Mammary epithelial cell (primary cell): ENCODE measurements at regions of chr9 and their contacts with region 1.

Region 1: GRCh38 chr9:80885894-80886293 is 803.5 kb downstream of the TLE1 start:
- DNase-seq: no peak
- H3K4me3 ChIP-seq: no peak overlapping the region
- H3K27ac ChIP-seq: no peak overlapping the region
- H3K4me1 ChIP-seq: no peaks in the 10 kb centered on the region
- H3K27me3 ChIP-seq: no peaks in the 10 kb centered on the region
- CTCF ChIP-seq: peak in 1 of 2 donors; percentile 49

Region 2: DNA sequence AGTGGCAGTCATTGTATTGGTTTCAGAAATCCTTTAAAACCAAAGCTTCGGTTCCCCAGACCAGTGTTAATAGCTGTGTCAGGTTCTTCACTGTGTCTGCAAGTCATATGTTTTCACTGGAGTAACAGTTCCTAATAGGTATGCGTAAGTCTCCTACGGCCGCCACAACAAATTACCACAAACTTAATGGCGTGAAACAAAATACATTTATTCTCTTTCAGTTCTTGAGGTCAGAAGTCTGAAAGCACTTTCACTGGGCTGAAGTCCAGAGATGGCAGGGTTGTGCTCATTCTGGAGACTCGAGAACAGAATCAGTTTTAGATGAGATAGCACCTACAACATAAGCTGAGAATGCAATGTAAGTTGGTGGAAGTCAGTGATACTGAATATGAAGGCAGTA is 758.0 kb before region 1 on chr9:
- CTCF ChIA-PET with region 1: no interaction called
- dilution Hi-C with region 1: no loop called
- in situ Hi-C with region 1: no loop called
- intact Hi-C with region 1: no loop called
- DNase-seq: no peak
- H3K4me3 ChIP-seq: no peak overlapping the region
- H3K27ac ChIP-seq: no peak overlapping the region
- H3K4me1 ChIP-seq: no peaks in the 10 kb centered on the region
- H3K27me3 ChIP-seq: no peaks in the 10 kb centered on the region
- CTCF ChIP-seq: no peak

Region 3: GRCh38 chr9:80175286-80176150 is 710.4 kb before region 1 on chr9:
- CTCF ChIA-PET with region 1: no interaction called
- dilution Hi-C with region 1: no loop called
- in situ Hi-C with region 1: no loop called
- intact Hi-C with region 1: loop called (anchors 5 kb)
- DNase-seq: peak; percentile 16
- H3K4me3 ChIP-seq: no peak overlapping the region
- H3K27ac ChIP-seq: no peak overlapping the region
- H3K4me1 ChIP-seq: no peaks in the 10 kb centered on the region
- H3K27me3 ChIP-seq: no peaks in the 10 kb centered on the region
- CTCF ChIP-seq: peak; percentile 59 to 71

Region 4: GRCh38 chr9:80285326-80285725 is 600.6 kb before region 1 on chr9:
- CTCF ChIA-PET with region 1: no interaction called
- dilution Hi-C with region 1: no loop called
- in situ Hi-C with region 1: no loop called
- intact Hi-C with region 1: loop called (anchors 10 kb)
- DNase-seq: peak; percentile 13
- H3K4me3 ChIP-seq: no peak overlapping the region
- H3K27ac ChIP-seq: no peak overlapping the region
- H3K4me1 ChIP-seq: no peaks in the 10 kb centered on the region
- H3K27me3 ChIP-seq: no peaks in the 10 kb centered on the region
- CTCF ChIP-seq: peak; percentile 23 to 43

Region 5: DNA sequence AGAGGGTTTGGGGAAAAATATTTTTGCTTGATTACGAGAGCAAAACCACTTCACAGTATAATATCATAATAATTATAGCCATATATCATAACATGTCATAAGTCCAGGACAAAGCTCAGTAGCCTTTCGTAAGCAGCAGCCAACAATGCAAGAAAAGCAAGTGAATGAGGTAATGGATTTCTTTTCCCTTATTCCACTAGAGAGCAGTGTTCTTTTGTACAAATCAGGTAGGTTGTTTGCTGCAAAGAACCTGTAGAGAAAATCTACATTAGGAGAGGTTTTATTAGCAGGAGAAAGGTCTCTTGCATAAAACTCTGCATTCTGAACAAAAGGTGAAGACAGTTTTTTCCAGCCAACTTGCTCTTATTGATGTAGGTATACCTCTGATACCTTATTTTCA is 280.8 kb before region 1 on chr9:
- CTCF ChIA-PET with region 1: no interaction called
- dilution Hi-C with region 1: no loop called
- in situ Hi-C with region 1: no loop called
- intact Hi-C with region 1: loop called (anchors 1 kb)
- DNase-seq: peak; percentile 22
- H3K4me3 ChIP-seq: no peak overlapping the region
- H3K27ac ChIP-seq: no peak overlapping the region
- H3K4me1 ChIP-seq: no peaks in the 10 kb centered on the region
- H3K27me3 ChIP-seq: no peaks in the 10 kb centered on the region
- CTCF ChIP-seq: peak; percentile 27 to 49

Region 6: GRCh38 chr9:80664327-80665200 is 221.3 kb before region 1 on chr9:
- CTCF ChIA-PET with region 1: no interaction called
- dilution Hi-C with region 1: no loop called
- in situ Hi-C with region 1: no loop called
- intact Hi-C with region 1: loop called (anchors 1 kb)
- DNase-seq: peak; percentile 54
- H3K4me3 ChIP-seq: no peak overlapping the region
- H3K27ac ChIP-seq: no peak overlapping the region
- H3K4me1 ChIP-seq: no peaks in the 10 kb centered on the region
- H3K27me3 ChIP-seq: no peaks in the 10 kb centered on the region
- CTCF ChIP-seq: peak; percentile 34 to 66

Region 7: GRCh38 chr9:81045658-81046057 is 159.8 kb after region 1 on chr9:
- CTCF ChIA-PET with region 1: no interaction called
- dilution Hi-C with region 1: no loop called
- in situ Hi-C with region 1: no loop called
- intact Hi-C with region 1: no loop called
- DNase-seq: no peak
- H3K4me3 ChIP-seq: no peak overlapping the region
- H3K27ac ChIP-seq: no peak overlapping the region
- H3K4me1 ChIP-seq: no peaks in the 10 kb centered on the region
- H3K27me3 ChIP-seq: no peaks in the 10 kb centered on the region
- CTCF ChIP-seq: no peak